ENCODE measurements at regions of chr13 and their contacts with region 1.

Region 1: DNA sequence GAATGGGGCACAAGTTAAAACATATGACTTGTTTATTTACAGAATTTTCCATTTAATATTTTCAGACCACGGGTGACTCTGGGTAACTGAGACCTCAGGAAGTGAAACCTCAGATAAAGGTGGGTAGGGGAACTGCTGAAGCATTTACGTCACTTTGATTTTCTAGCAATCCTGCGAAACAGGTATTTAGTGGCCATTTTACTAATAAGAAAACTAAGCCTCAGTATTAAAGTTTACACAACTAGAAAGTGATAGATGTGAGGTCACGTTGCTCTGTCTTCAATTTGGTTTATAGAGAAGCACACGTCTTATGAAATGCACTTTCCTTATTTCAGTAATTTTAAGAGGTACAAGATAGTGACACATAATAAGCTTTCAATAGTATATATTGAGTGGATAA is 402.8 kb downstream of the FGF9 start:
- DNase-seq: no peak
- H3K4me3 Mint-ChIP-seq: no peak overlapping the region
- H3K27ac Mint-ChIP-seq: peak overlapping the region; percentile 85
- H3K4me1 Mint-ChIP-seq: peaks cover 57% of the 10 kb centered on the region
- H3K27me3 Mint-ChIP-seq: no peaks in the 10 kb centered on the region

Region 2: DNA sequence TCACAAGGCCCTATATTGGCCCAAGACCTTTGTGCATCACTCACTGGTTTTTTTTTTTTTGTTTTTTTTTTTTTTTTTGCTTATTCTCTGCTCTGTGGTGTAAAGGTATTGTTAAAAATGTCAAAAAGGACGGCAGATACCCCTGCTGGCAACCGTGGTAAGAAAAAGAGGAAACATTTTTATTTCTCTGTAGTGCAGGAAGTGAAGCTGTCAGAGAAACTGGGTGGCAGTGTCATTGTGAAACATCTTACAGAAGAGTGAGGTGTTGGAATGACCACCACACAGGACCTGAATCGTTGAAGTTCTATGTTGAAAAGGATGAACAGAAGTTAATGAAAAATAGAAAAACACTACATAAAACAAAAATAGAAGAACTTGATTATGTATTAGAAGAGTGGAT is 56.5 kb before region 1 on chr13:
- intact Hi-C with region 1: loop called (anchors 2 kb)
- DNase-seq: no peak
- H3K4me3 Mint-ChIP-seq: no peak overlapping the region
- H3K27ac Mint-ChIP-seq: no peak overlapping the region
- H3K4me1 Mint-ChIP-seq: peaks cover 4% of the 10 kb centered on the region
- H3K27me3 Mint-ChIP-seq: no peaks in the 10 kb centered on the region

Region 3: GRCh38 chr13:22061806-22062391 is 11.8 kb before region 1 on chr13:
- intact Hi-C with region 1: loop called (anchors 1 kb)
- DNase-seq: no peak
- H3K4me3 Mint-ChIP-seq: peak overlapping the region; percentile 49
- H3K27ac Mint-ChIP-seq: peak overlapping the region; percentile 87
- H3K4me1 Mint-ChIP-seq: peaks cover 45% of the 10 kb centered on the region
- H3K27me3 Mint-ChIP-seq: no peaks in the 10 kb centered on the region

Region 4: GRCh38 chr13:22107548-22107947 is 33.8 kb after region 1 on chr13:
- intact Hi-C with region 1: loop called (anchors 2 kb)
- DNase-seq: no peak
- H3K4me3 Mint-ChIP-seq: no peak overlapping the region
- H3K27ac Mint-ChIP-seq: peak overlapping the region; percentile 76
- H3K4me1 Mint-ChIP-seq: peaks cover 55% of the 10 kb centered on the region
- H3K27me3 Mint-ChIP-seq: no peaks in the 10 kb centered on the region

Region 5: DNA sequence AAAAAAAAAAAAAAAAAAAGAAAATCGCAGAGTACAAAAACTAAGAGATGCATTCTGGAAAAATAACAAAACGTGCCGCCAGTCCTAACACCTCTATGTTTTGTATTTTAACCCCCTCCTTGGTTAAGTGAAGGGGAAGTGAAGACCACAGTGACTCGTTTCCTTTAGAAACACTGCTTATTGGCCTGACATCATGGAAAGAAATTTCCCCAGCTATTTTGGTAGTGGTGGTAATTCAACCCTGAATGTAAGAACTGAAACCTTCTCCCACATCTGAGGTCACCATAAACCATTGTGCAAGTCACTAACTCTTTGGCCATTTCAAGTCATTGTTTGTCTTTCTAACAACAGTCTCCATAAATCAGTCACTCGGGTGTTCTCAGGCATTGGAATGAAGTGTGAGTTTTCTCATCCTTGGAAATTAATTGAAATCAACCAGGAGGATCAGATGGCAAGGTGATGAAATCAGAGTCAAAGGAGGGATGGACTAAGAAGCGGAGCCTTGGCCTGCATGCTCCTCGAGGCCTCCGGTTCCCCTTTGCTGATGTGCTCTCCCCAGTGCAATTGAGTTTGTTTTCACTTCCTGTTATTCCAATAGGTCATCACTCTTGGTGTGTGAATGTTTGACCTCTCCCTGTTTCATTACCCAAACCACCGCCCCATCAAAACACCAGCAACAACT is 41.1 kb after region 1 on chr13:
- intact Hi-C with region 1: loop called (anchors 1 kb)
- DNase-seq: peak; percentile 31
- H3K4me3 Mint-ChIP-seq: no peak overlapping the region
- H3K27ac Mint-ChIP-seq: peak overlapping the region; percentile 91
- H3K4me1 Mint-ChIP-seq: peaks cover 51% of the 10 kb centered on the region
- H3K27me3 Mint-ChIP-seq: no peaks in the 10 kb centered on the region

Region 6: GRCh38 chr13:22126433-22127021 is 52.8 kb after region 1 on chr13:
- intact Hi-C with region 1: loop called (anchors 1 kb)
- DNase-seq: no peak
- H3K4me3 Mint-ChIP-seq: peak overlapping the region; percentile 22
- H3K27ac Mint-ChIP-seq: peak overlapping the region; percentile 22
- H3K4me1 Mint-ChIP-seq: peaks cover 41% of the 10 kb centered on the region
- H3K27me3 Mint-ChIP-seq: no peaks in the 10 kb centered on the region

Region 7: DNA sequence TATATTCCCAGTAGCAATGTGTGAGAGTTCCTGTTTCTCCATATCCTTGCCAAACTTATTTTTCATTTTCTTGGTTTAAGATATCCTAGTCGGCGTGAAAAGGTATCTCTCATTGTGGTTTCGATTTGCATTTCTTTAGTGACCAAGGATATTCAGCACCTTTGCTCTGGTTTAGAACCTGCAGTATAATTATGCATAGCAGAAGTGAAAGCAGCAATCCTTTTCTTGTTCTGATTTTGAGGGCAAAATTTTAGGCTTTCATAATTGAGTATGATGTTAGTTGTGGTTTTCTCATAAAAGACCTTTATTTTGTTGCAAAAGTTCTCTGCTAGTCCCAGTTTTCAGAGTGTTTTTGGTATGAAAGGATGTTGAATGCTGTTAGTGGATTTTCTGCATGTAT is 88.2 kb after region 1 on chr13:
- intact Hi-C with region 1: loop called (anchors 2 kb)
- DNase-seq: no peak
- H3K4me3 Mint-ChIP-seq: no peak overlapping the region
- H3K27ac Mint-ChIP-seq: no peak overlapping the region
- H3K4me1 Mint-ChIP-seq: peaks cover 20% of the 10 kb centered on the region
- H3K27me3 Mint-ChIP-seq: peaks cover 5% of the 10 kb centered on the region

Region 8: GRCh38 chr13:22405891-22406290 is 332.2 kb after region 1 on chr13:
- intact Hi-C with region 1: no loop called
- DNase-seq: no peak
- H3K4me3 Mint-ChIP-seq: no peak overlapping the region
- H3K27ac Mint-ChIP-seq: no peak overlapping the region
- H3K4me1 Mint-ChIP-seq: no peaks in the 10 kb centered on the region
- H3K27me3 Mint-ChIP-seq: no peaks in the 10 kb centered on the region